ENCODE measurements at regions of chr5 and their contacts with region 1.

Region 1: DNA sequence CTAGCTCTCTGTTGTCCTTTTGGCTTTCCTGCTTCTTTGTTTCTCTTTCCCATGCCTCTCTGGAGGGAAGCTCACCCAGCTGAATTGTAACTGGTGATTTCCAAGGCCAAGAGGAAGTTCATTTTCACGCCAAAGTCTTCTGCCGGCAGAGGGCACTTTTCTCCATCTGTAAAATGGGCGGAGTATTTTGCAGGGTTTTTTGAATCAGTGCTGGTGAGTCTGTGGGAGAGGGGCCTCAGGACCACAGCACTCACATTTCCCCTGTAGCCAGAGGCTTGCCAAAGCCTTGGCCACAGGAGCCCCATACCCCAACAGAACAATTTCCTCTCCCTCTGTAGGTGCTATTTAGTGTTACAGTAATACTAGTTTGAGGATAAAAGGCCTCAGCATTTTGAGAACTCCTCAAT is 42.3 kb upstream of the MATR3 start:
- DNase-seq: no peak
- H3K4me3 ChIP-seq: no peak overlapping the region
- H3K27ac ChIP-seq: no peak overlapping the region
- H3K4me1 ChIP-seq: no peaks in the 10 kb centered on the region
- H3K27me3 ChIP-seq: no peaks in the 10 kb centered on the region
- CTCF ChIP-seq: peak; percentile 34

Region 2: DNA sequence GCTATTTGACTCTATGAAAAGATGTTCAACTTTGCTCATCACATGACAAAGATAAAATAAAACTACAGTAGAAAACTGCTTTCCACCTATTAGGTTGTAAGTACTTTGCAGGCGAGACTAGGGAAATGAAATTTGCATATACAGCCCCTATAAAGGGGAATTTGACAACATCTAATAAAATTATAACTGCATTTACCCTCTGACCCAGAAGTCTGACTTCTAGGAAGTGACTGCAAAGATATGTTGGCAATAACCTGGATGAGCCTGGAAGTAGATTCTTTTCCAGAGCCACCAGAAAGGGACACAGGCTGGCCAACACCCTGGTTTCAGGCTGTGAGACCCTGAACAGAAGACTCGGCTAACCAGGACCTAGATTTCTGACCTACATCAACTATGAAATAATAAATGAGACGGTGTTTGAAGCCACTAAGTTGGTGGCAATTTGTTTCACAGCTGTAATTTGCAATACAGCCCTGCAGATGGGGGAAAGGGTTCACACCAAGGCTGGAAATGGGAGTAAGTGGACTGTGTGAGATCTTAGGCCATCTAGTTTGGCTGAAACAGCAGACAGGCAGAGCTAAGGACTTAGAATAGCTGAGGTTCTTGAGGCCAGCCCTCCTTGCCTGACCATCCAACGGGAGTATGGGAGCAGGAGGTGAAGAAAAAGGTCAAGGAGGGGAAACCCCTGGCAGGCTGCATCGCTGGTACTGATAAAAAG is 159.7 kb before region 1 on chr5:
- intact Hi-C with region 1: loop called (anchors 10 kb)
- DNase-seq: no peak
- H3K4me3 ChIP-seq: no peak overlapping the region
- H3K27ac ChIP-seq: no peak overlapping the region
- H3K4me1 ChIP-seq: peaks cover 12% of the 10 kb centered on the region
- H3K27me3 ChIP-seq: no peaks in the 10 kb centered on the region
- CTCF ChIP-seq: peak; percentile 58

Region 3: DNA sequence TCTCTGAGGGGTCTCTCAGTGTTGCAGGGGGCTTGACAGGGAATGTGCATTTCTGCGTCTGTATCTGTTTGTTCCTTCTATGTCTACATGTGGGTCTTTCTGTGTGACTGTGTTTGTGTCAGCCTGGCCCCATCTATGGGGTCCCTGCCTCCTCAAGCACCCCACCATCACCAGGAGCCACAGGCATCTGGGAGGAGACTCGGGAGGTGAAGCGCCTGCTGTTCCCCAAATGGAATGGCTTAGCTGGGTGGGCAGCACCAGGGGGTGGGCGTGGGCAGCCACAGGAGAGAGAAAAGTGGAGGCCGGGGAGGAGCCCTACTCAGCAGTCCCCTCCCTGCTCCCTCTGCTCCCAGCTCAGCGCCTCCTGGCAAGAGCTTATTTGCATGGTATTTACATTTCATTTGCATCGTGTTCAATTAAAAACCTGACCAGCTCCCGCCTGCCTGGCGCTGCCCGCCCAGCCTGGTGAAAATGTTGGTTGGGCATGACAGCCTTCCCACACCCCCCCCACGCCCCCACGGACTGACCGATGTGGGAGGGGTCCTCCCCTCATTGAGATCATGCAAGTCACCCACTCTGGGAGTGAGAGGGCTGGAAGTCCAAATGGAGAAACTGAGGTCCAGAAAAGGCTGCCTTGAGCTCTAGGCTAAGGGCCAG is 447.3 kb after region 1 on chr5:
- intact Hi-C with region 1: no loop called
- DNase-seq: peak; percentile 86
- H3K4me3 ChIP-seq: no peak overlapping the region
- H3K27ac ChIP-seq: peak overlapping the region; percentile 96
- H3K4me1 ChIP-seq: peaks cover 49% of the 10 kb centered on the region
- H3K27me3 ChIP-seq: no peaks in the 10 kb centered on the region
- CTCF ChIP-seq: no peak